Naive thymus-derived CD4-positive, alpha-beta T cell (primary cell): ENCODE measurements at regions of chr12 and their contacts with region 1.

Region 1: DNA sequence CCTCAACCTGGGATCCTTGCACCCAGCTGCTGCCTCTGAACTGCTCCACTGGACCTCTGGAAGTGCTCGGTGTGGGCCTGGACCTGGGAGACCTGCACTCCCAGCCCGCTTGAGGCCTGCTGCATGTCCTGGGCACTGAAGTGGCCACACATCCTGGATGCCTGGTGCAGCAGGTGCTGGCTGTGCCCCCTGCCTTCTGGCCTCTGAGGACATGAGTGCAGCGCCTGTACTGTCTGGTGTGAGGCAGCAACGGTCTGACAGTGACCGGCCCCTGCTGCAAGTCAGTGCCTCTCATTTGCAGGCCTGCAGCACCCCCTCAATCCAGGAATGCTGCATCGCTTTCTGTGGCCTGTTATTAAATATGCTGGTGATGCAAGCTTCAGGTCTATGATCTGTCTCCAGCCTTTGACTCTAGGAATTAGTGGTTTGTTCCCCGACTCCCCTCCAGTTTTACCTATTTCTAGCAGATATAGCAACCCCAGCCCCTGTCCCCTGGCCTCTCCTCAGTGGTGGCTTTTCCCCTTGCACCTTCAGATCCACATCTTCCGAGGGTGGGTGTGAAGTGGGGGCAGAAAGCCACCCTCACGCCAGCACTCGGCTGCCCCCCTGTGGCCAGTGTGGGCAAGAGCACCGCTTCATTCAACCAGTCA is 3.6 kb downstream of the SMIM41 start:
- DNase-seq: peak; percentile 49 to 74 (median 66)
- ATAC-seq: peak; percentile 86
- H3K4me3 ChIP-seq: no peak overlapping the region
- H3K4me3 Mint-ChIP-seq: peak overlapping the region in 2 of 10 donors; percentile 17 to 52
- H3K27ac ChIP-seq: no peak overlapping the region
- H3K27ac Mint-ChIP-seq: peak overlapping the region in 4 of 9 donors; percentile 47 to 83 (median 72)
- H3K4me1 ChIP-seq: peaks cover 0 to 12% of the 10 kb centered on the region in 2 donors
- H3K4me1 Mint-ChIP-seq: peaks cover 6 to 17% (median 12%) of the 10 kb centered on the region in 7 donors
- H3K27me3 ChIP-seq: no peaks in the 10 kb centered on the region
- H3K27me3 Mint-ChIP-seq: peaks cover 4 to 14% (median 10%) of the 10 kb centered on the region in 5 donors

Region 2: GRCh38 chr12:52069327-52070184 is 13.6 kb before region 1 on chr12 and contains the start of gene ATG101:
- CTCF ChIA-PET with region 1: interaction called, 9 read pairs
- POLR2A ChIA-PET with region 1: no interaction called
- intact Hi-C with region 1: loop called (anchors 1 kb)
- DNase-seq: peak; percentile 80 to 92 (median 89)
- ATAC-seq: peak; percentile 97
- H3K4me3 ChIP-seq: peak within 1 kb of the TSS; percentile 96
- H3K4me3 Mint-ChIP-seq: peak within 1 kb of the TSS; percentile 88 to 99 (median 96)
- H3K27ac ChIP-seq: peak within 1 kb of the TSS; percentile 87
- H3K27ac Mint-ChIP-seq: peak within 1 kb of the TSS; percentile 97 to 100 (median 98)
- H3K4me1 ChIP-seq: peaks cover 19 to 31% of the 10 kb centered on the region in 2 donors
- H3K4me1 Mint-ChIP-seq: peaks cover 35 to 59% (median 49%) of the 10 kb centered on the region in 7 donors
- H3K27me3 ChIP-seq: no peaks in the 10 kb centered on the region
- H3K27me3 Mint-ChIP-seq: peaks cover 0 to 5% (median 0%) of the 10 kb centered on the region in 5 donors
- total RNA-seq, gene ATG101: 20.7 to 39.7 (median 34.3) TPM

Region 3: GRCh38 chr12:52097045-52097666 is 14.0 kb after region 1 on chr12:
- CTCF ChIA-PET with region 1: no interaction called
- POLR2A ChIA-PET with region 1: no interaction called
- intact Hi-C with region 1: no loop called
- DNase-seq: no peak
- ATAC-seq: no peak
- H3K4me3 ChIP-seq: no peak overlapping the region
- H3K4me3 Mint-ChIP-seq: no peak overlapping the region
- H3K27ac ChIP-seq: no peak overlapping the region
- H3K27ac Mint-ChIP-seq: no peak overlapping the region
- H3K4me1 ChIP-seq: no peaks in the 10 kb centered on the region
- H3K4me1 Mint-ChIP-seq: no peaks in the 10 kb centered on the region
- H3K27me3 ChIP-seq: no peaks in the 10 kb centered on the region
- H3K27me3 Mint-ChIP-seq: peaks cover 21 to 54% (median 52%) of the 10 kb centered on the region in 5 donors

Region 4: DNA sequence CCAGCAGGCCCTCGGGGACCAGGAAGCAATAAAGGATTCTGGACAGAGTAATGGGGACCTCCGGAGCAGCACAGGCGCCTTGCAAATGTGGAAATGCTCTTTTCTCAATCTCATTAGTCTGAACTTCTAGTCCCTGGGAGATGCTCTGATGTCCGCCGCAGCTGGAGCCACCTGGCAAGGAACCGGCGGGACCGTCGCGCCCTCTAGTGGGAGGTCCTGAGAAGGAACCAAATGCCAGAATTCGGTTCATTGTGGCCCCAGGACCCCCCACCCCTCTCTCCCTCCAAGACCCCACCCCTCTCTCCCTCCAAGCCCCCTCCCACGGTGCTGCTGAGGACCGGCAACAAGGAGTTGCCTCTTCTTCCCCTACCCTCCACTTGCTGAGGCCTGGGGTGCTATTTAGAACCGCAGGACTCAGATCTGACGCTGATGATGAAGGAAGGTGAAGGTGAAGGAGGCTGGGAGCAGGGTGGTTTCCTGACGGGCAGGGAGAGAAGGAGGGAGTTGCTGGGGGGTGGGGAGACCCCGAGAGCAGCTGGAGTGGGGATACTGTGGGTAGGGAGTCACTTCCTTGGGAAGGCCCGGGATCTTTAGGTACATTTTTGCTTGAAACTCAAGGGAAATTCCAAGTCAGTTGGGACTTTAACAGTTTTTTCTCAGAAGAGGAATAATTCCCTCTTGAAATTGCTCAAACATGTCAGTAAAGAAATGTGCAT is 38.9 kb after region 1 on chr12:
- CTCF ChIA-PET with region 1: interaction called, 3 read pairs
- POLR2A ChIA-PET with region 1: no interaction called
- intact Hi-C with region 1: loop called (anchors 1 to 5 kb)
- DNase-seq: peak in 8 of 9 donors; percentile 24 to 73 (median 46)
- ATAC-seq: peak; percentile 55
- H3K4me3 ChIP-seq: no peak overlapping the region
- H3K4me3 Mint-ChIP-seq: peak overlapping the region in 4 of 10 donors; percentile 20 to 41 (median 24)
- H3K27ac ChIP-seq: no peak overlapping the region
- H3K27ac Mint-ChIP-seq: no peak overlapping the region
- H3K4me1 ChIP-seq: peaks cover 0 to 3% of the 10 kb centered on the region in 2 donors
- H3K4me1 Mint-ChIP-seq: peaks cover 4 to 19% (median 12%) of the 10 kb centered on the region in 7 donors
- H3K27me3 ChIP-seq: no peaks in the 10 kb centered on the region
- H3K27me3 Mint-ChIP-seq: peaks cover 9 to 22% (median 21%) of the 10 kb centered on the region in 5 donors